WTC11 (cell line): ENCODE measurements at regions of chr6 and their contacts with region 1.

Region 1: GRCh38 chr6:70955441-70956190 is 1.2 kb downstream of the B3GAT2 start:
- DNase-seq: peak; percentile 97
- ATAC-seq: peak; percentile 84
- H3K4me3 Mint-ChIP-seq: peak overlapping the region; percentile 80
- H3K27ac Mint-ChIP-seq: no peak overlapping the region
- H3K4me1 Mint-ChIP-seq: peaks cover 26% of the 10 kb centered on the region
- H3K27me3 Mint-ChIP-seq: peaks cover 70% of the 10 kb centered on the region
- CTCF ChIP-seq: peak; percentile 82

Region 2: GRCh38 chr6:70706491-70707123 is 249.0 kb before region 1 on chr6:
- CTCF ChIA-PET with region 1: interaction called, 24 read pairs
- POLR2A ChIA-PET with region 1: no interaction called
- DNase-seq: no peak
- ATAC-seq: no peak
- H3K4me3 Mint-ChIP-seq: no peak overlapping the region
- H3K27ac Mint-ChIP-seq: no peak overlapping the region
- H3K4me1 Mint-ChIP-seq: peaks cover 8% of the 10 kb centered on the region
- H3K27me3 Mint-ChIP-seq: no peaks in the 10 kb centered on the region
- CTCF ChIP-seq: peak; percentile 36; the same call in 1 of the 2 replicates

Region 3: GRCh38 chr6:70806086-70806485 is 149.5 kb before region 1 on chr6:
- CTCF ChIA-PET with region 1: no interaction called
- POLR2A ChIA-PET with region 1: no interaction called
- DNase-seq: no peak
- ATAC-seq: no peak
- H3K4me3 Mint-ChIP-seq: no peak overlapping the region
- H3K27ac Mint-ChIP-seq: no peak overlapping the region
- H3K4me1 Mint-ChIP-seq: no peaks in the 10 kb centered on the region
- H3K27me3 Mint-ChIP-seq: no peaks in the 10 kb centered on the region
- CTCF ChIP-seq: no peak

Region 4: GRCh38 chr6:70843328-70843918 is 112.2 kb before region 1 on chr6:
- CTCF ChIA-PET with region 1: interaction called, 11 read pairs
- POLR2A ChIA-PET with region 1: no interaction called
- DNase-seq: no peak
- ATAC-seq: peak; percentile 59
- H3K4me3 Mint-ChIP-seq: no peak overlapping the region
- H3K27ac Mint-ChIP-seq: no peak overlapping the region
- H3K4me1 Mint-ChIP-seq: peaks cover 11% of the 10 kb centered on the region
- H3K27me3 Mint-ChIP-seq: peaks cover under 1% of the 10 kb centered on the region; the same call in 1 of the 2 replicates
- CTCF ChIP-seq: no peak

Region 5: DNA sequence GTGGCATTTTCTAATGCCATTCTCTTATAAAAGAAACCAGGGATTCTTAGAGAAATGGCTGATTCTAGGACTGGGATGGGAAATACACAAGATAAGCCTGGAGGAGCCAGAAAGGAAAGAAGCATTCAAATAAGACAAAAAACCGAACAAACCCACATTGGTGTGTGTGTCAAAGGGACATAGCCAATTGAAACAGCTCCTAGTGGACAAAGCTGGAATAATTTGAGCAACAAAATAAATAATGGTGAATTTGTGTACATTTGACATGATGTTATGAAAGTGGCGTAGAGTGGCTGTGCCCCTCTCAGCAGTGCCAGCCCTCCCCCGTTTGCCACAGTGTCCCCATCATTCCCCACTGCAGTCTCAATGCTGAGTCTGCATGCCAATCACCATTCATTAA is 54.3 kb before region 1 on chr6:
- CTCF ChIA-PET with region 1: interaction called, 10 read pairs
- POLR2A ChIA-PET with region 1: no interaction called
- DNase-seq: no peak
- ATAC-seq: no peak
- H3K4me3 Mint-ChIP-seq: no peak overlapping the region
- H3K27ac Mint-ChIP-seq: no peak overlapping the region
- H3K4me1 Mint-ChIP-seq: no peaks in the 10 kb centered on the region; the same call in 1 of the 2 replicates
- H3K27me3 Mint-ChIP-seq: no peaks in the 10 kb centered on the region
- CTCF ChIP-seq: no peak